ENCODE measurements at regions of chr9 and their contacts with region 1.

Region 1: GRCh38 chr9:2125906-2126305 is 110.8 kb downstream of the SMARCA2 start:
- DNase-seq: no peak
- H3K4me3 ChIP-seq: peak overlapping the region in 3 of 4 donors; percentile 13 to 26 (median 19)
- H3K27ac ChIP-seq: peak overlapping the region; percentile 80 to 85 (median 83)
- H3K4me1 ChIP-seq: peaks cover 0 to 70% (median 55%) of the 10 kb centered on the region in 4 donors
- H3K27me3 ChIP-seq: no peaks in the 10 kb centered on the region
- CTCF ChIP-seq: no peak
- EP300 ChIP-seq: no peak
- POLR2A ChIP-seq: no peak

Region 2: DNA sequence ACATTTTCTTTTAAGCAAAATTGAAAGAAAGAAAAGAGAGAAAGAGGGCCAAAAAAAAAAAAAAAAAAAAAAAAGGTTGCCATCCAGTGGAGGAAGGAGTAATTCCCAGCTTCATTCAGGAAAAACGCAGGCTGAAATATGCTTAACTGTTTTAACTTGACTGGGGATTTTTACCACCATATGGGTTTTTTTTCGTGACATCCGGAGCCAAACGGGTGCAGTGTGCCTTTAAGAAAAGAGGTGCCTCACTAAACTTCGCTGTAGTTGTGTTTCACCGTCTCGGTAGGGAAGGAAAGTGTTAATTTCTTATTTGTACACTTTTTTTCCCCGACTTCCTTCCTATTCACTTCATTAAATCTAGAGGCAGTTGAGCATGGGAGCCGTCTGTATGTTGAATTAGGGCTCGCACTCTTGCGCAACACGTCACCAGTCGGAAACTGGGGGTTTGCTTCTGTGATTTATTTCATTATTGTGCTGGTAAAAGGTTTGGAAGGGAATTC is 32.3 kb after region 1 on chr9:
- intact Hi-C with region 1: loop called (anchors 1 kb)
- DNase-seq: peak; percentile 67
- H3K4me3 ChIP-seq: peak overlapping the region; percentile 33 to 51 (median 45)
- H3K27ac ChIP-seq: peak overlapping the region; percentile 57 to 78 (median 74)
- H3K4me1 ChIP-seq: peaks cover 0 to 37% (median 17%) of the 10 kb centered on the region in 4 donors
- H3K27me3 ChIP-seq: no peaks in the 10 kb centered on the region
- CTCF ChIP-seq: no peak
- EP300 ChIP-seq: no peak
- POLR2A ChIP-seq: no peak

Region 3: DNA sequence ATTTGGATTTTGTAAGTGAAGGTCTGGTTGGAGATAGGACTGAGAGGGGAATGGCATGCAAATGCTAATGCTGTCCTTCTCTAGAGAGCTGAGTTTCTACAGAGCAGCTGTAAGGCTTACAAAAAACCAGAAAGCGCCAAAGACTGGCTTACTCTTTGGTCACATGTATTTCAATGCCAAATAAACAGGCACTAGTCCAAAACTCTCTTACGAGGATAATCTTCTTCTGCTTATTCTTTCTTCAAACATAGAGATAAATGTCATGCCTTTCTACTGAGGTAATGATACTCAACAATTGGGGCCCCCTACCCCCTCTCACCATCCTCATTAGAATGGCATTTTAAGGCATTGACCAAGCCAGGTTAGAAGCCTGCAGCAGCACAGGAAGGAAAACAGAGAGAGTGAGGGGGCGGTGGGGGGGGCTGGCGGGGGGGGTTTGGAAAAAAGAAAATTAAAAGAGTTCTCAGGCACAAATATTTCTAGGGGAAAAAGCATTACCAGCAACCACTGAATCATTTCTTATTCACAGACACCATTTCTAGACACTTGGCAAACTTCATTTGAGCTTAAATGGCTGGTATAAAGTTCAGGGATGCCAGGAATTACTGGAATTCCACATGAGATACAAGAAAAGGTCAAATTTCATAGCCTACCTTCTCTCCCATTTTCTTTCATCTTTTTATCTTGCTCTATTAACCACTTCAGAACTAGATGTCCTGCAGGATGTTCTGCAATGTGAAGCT is 684.0 kb after region 1 on chr9:
- intact Hi-C with region 1: loop called (anchors 10 kb)
- DNase-seq: no peak
- H3K4me3 ChIP-seq: no peak overlapping the region
- H3K27ac ChIP-seq: peak overlapping the region; percentile 59 to 81 (median 66)
- H3K4me1 ChIP-seq: peaks cover 0 to 46% (median 31%) of the 10 kb centered on the region in 4 donors
- H3K27me3 ChIP-seq: no peaks in the 10 kb centered on the region
- CTCF ChIP-seq: no peak
- EP300 ChIP-seq: peak in 1 of 4 donors; percentile 65
- POLR2A ChIP-seq: no peak